ENCODE measurements at regions of chr5 and their contacts with region 1.

Region 1: GRCh38 chr5:139765409-139766217 is 30.0 kb upstream of the PSD2 start:
- DNase-seq: peak; percentile 9
- H3K4me3 ChIP-seq: peak overlapping the region; percentile 58
- H3K27me3 ChIP-seq: peaks cover 10% of the 10 kb centered on the region
- CTCF ChIP-seq: peak; percentile 93

Region 2: DNA sequence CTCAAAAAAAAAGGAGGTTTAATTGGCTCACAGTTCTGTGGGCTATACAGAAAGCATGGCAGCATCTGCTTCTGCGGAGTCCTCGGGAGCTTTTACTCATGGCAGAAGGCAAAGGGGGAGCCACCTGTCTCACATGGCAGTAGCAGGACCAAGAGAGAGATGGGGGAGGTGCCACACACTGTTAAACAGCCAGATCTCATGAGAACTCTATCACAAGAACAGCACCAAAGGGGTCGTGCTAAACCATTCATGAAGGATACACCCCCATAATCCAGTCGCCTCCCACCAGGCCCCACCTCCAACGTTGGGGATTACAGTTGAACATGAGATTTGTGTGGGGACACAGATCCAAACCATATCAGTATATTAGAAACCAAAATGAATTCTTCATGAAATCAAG is 145.8 kb before region 1 on chr5:
- CTCF ChIA-PET with region 1: interaction called, 13 read pairs
- POLR2A ChIA-PET with region 1: no interaction called
- DNase-seq: no peak
- H3K4me3 ChIP-seq: no peak overlapping the region
- H3K27me3 ChIP-seq: no peaks in the 10 kb centered on the region
- CTCF ChIP-seq: no peak

Region 3: GRCh38 chr5:139642891-139643871 is 122.4 kb before region 1 on chr5:
- CTCF ChIA-PET with region 1: interaction called, 498 read pairs
- POLR2A ChIA-PET with region 1: no interaction called
- DNase-seq: no peak
- H3K4me3 ChIP-seq: no peak overlapping the region
- H3K27me3 ChIP-seq: no peaks in the 10 kb centered on the region
- CTCF ChIP-seq: no peak

Region 4: GRCh38 chr5:139660923-139661814 is 104.4 kb before region 1 on chr5:
- CTCF ChIA-PET with region 1: interaction called, 14 read pairs
- POLR2A ChIA-PET with region 1: no interaction called
- DNase-seq: peak; percentile 74
- H3K4me3 ChIP-seq: no peak overlapping the region
- H3K27me3 ChIP-seq: no peaks in the 10 kb centered on the region
- CTCF ChIP-seq: no peak

Region 5: GRCh38 chr5:139696894-139697658 is 68.5 kb before region 1 on chr5:
- CTCF ChIA-PET with region 1: interaction called, 94 read pairs
- POLR2A ChIA-PET with region 1: no interaction called
- DNase-seq: peak; percentile 69
- H3K4me3 ChIP-seq: peak overlapping the region; percentile 45
- H3K27me3 ChIP-seq: no peaks in the 10 kb centered on the region
- CTCF ChIP-seq: no peak

Region 6: DNA sequence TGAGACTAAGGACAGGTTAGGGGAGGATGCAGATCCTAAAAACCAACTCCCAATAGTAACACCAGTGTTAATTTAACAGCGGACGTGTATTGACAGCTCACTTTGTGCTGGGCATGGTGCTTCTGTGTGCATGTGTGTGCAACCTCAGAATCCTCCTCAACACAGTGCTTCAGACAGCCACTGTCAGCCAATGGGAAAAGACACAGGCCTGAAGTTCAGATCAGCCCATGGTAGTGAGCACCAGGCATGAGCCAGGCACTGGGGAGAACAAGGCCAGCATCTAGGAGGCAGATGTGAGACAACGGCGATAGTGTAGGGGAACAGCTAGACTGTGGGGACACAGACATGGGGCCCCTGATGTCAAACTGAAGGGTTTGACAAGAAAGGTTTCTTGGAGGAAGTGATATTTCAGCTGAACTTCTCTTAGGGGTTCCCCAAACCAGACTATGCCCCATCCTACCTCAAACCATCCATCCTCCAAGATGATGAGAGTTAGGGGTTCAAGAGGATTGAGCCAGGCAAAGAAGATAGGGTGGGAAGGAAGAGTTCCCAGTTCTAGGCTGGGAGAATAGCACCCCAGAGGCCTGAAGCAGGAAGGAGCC is 41.5 kb before region 1 on chr5:
- CTCF ChIA-PET with region 1: interaction called, 10 read pairs
- POLR2A ChIA-PET with region 1: no interaction called
- DNase-seq: no peak
- H3K4me3 ChIP-seq: no peak overlapping the region
- H3K27me3 ChIP-seq: no peaks in the 10 kb centered on the region
- CTCF ChIP-seq: no peak

Region 7: GRCh38 chr5:139787568-139788293 is 22.1 kb after region 1 on chr5:
- CTCF ChIA-PET with region 1: interaction called, 23 read pairs
- POLR2A ChIA-PET with region 1: no interaction called
- DNase-seq: peak; percentile 9
- H3K4me3 ChIP-seq: peak overlapping the region; percentile 45
- H3K27me3 ChIP-seq: peaks cover 5% of the 10 kb centered on the region
- CTCF ChIP-seq: peak; percentile 98

Measured in BJ (cell line).